Activated CD8-positive, alpha-beta T cell treated with anti-CD3 and anti-CD28 coated beads, Interleukin-2, amount 10 ng/mL, durations not matched to agents 7 days and 5 days (primary cell): ENCODE measurements at regions of chr18 and their contacts with region 1.

Region 1: DNA sequence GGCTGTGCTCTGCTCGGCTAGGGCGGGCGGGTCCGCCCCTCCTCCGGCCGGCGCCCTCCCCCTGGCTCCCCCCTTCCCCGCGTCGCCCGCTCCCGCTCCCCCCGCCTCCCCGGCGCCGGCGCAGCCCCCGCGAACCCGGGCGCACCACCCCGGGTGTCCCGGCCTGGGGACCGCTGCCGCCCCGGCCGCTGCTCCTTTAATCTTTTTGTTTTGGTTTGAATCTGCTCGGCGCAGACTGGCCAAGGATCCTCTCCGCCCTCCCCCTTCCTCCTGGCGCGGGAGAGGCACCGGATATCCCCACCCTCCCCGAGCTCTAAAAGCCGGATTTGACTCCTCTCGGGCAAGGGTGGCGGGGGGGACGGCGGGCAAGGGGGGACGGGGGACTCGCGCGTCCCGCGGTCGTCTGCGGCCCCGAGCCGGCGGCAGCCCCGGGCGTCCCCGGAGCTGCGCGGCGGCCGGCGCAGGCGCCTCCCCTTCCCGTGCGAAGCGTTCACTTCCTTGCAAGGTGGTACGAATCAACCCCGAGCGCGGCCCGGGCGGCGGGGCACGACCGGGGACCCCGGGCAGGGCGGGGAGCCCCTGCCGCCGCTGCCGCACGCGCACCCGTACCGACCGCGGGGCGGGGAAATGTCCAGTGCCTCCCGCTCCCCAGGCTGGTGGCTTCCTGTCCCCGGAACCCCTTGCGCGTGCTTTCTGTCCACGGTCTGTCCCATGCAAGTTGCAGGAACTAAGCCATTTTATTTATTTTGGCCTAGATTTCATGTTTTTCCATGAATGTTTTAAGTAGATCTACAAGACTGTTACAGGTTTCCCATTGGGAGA is at the start of gene PTGR3:
- DNase-seq: peak; percentile 90
- ATAC-seq: peak; percentile 63
- H3K4me3 Mint-ChIP-seq: peak within 1 kb of the TSS; percentile 99
- H3K27ac Mint-ChIP-seq: peak within 1 kb of the TSS; percentile 99
- H3K4me1 Mint-ChIP-seq: peaks cover 54% of the 10 kb centered on the region
- H3K27me3 Mint-ChIP-seq: peaks cover 24% of the 10 kb centered on the region
- total RNA-seq, gene PTGR3: 21.8 to 21.9 TPM

Region 2: GRCh38 chr18:75070625-75071483 is 138.5 kb before region 1 on chr18:
- CTCF ChIA-PET with region 1: no interaction called
- POLR2A ChIA-PET with region 1: interaction called, 24 read pairs
- DNase-seq: peak; percentile 83
- ATAC-seq: peak; percentile 91
- H3K4me3 Mint-ChIP-seq: peak overlapping the region; percentile 78
- H3K27ac Mint-ChIP-seq: peak overlapping the region; percentile 99
- H3K4me1 Mint-ChIP-seq: peaks cover 25% of the 10 kb centered on the region
- H3K27me3 Mint-ChIP-seq: no peaks in the 10 kb centered on the region

Region 3: GRCh38 chr18:75246721-75247610 is 37.6 kb after region 1 on chr18:
- CTCF ChIA-PET with region 1: interaction called, 4 read pairs
- POLR2A ChIA-PET with region 1: interaction called, 18 read pairs
- DNase-seq: peak; percentile 41
- ATAC-seq: peak; percentile 51
- H3K4me3 Mint-ChIP-seq: peak overlapping the region; percentile 83
- H3K27ac Mint-ChIP-seq: peak overlapping the region; percentile 92
- H3K4me1 Mint-ChIP-seq: peaks cover 49% of the 10 kb centered on the region
- H3K27me3 Mint-ChIP-seq: no peaks in the 10 kb centered on the region